ENCODE measurements at regions of chr14 and their contacts with region 1.

Region 1: DNA sequence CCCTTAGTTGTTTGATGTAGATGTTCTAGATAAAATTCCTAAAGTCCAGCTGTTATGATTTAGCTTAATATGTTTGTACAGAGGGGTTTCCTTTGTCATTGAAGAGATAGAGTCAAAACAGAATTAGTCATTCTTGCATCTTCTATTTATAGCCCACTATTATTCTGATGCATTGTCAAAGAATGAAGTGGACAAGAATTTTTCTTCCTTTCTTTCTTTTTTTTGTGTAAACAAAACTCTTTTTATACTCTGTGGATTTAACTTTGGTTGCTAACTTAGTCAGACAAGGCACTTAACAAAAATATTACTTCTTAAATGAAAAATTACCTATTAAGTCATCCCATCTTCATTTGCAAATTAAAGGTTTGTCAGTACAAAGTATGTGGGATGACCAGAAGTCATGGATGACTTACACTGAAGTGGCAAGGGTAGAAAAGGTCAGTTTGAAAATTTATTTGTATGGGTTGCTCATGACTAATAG is 215.6 kb upstream of the DDHD1 start:
- DNase-seq: no peak
- H3K4me3 ChIP-seq: no peak overlapping the region
- H3K27ac ChIP-seq: peak overlapping the region in 1 of 2 donors; percentile 14
- H3K4me1 ChIP-seq: no peaks in the 10 kb centered on the region
- H3K27me3 ChIP-seq: no peaks in the 10 kb centered on the region
- CTCF ChIP-seq: no peak
- POLR2A ChIP-seq: no peak

Region 2: DNA sequence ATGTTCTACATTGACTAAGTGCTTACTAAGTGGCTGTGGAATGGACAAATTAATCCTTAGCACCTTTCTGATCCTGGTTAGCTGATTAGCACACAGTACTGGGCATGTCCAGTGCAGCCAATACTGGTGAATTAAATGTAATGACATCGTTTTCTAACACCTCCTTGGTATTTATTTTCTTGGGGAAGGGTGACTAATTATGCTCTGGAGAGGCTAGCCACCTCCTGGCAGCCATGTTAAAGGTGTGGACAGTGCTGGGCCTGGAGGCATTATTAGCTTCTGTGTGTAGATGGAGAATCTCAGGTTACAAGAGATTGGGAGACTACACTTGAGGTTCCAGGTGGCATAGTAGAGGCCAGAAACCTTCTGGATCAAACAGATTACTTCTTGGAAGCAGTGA is 15.3 kb after region 1 on chr14:
- intact Hi-C with region 1: loop called (anchors 2 kb)
- DNase-seq: no peak
- H3K4me3 ChIP-seq: no peak overlapping the region
- H3K27ac ChIP-seq: no peak overlapping the region
- H3K4me1 ChIP-seq: no peaks in the 10 kb centered on the region
- H3K27me3 ChIP-seq: no peaks in the 10 kb centered on the region
- CTCF ChIP-seq: no peak
- POLR2A ChIP-seq: no peak

Region 3: GRCh38 chr14:53399057-53399456 is 30.3 kb after region 1 on chr14:
- intact Hi-C with region 1: loop called (anchors 2 kb)
- DNase-seq: no peak
- H3K4me3 ChIP-seq: no peak overlapping the region
- H3K27ac ChIP-seq: no peak overlapping the region
- H3K4me1 ChIP-seq: no peaks in the 10 kb centered on the region
- H3K27me3 ChIP-seq: no peaks in the 10 kb centered on the region
- CTCF ChIP-seq: no peak
- POLR2A ChIP-seq: no peak

Region 4: GRCh38 chr14:53894456-53894855 is 525.7 kb after region 1 on chr14:
- intact Hi-C with region 1: no loop called
- DNase-seq: no peak
- H3K4me3 ChIP-seq: no peak overlapping the region
- H3K27ac ChIP-seq: no peak overlapping the region
- H3K4me1 ChIP-seq: no peaks in the 10 kb centered on the region
- H3K27me3 ChIP-seq: no peaks in the 10 kb centered on the region
- CTCF ChIP-seq: no peak
- POLR2A ChIP-seq: no peak

Measured in breast epithelium (tissue), 4 donors.